ENCODE measurements at regions of chr19 and their contacts with region 1.

Region 1: GRCh38 chr19:43668406-43669158 is 1.4 kb downstream of the PLAUR start:
- DNase-seq: peak; percentile 95 to 99 (median 97)
- H3K4me3 ChIP-seq: peak overlapping the region; percentile 68 to 76
- H3K4me3 Mint-ChIP-seq: peak overlapping the region; percentile 86 to 95 (median 92)
- H3K27ac ChIP-seq: peak overlapping the region; percentile 61
- H3K27ac Mint-ChIP-seq: peak overlapping the region; percentile 84 to 97 (median 95)
- H3K4me1 ChIP-seq: peaks cover 36% of the 10 kb centered on the region
- H3K4me1 Mint-ChIP-seq: peaks cover 32 to 58% (median 42%) of the 10 kb centered on the region in 4 donors
- H3K27me3 ChIP-seq: no peaks in the 10 kb centered on the region
- H3K27me3 Mint-ChIP-seq: no peaks in the 10 kb centered on the region

Region 2: DNA sequence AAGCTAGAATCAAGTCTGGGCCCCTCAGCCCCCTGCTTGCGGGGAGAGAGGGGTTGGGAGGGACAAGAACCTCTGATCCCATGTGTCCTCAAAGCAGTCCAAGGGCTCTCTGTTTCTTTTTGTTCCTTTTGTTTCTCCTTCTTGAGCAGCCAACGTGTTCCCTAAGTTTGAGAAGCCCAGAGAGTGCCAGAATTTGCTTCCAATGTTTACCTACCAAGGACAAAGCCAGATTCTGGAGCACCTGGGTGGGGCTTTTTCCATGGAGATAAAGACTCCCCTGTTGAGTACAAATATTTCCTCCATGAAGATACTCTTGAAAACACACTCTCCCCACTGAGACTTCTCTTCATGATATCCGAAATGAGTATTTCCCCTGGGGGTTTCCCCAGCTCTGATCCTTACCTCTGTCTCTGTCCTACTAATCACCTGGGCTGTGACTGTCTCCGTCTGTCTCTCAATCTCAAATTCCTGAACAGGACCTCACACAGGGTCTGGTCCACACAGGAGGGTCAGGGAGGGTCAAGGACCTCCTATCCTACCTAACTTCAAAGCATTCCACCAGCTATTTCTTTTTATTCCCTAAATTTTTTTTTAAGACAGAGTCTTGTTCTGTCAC is 287.7 kb before region 1 on chr19:
- CTCF ChIA-PET with region 1: no interaction called
- POLR2A ChIA-PET with region 1: no interaction called
- intact Hi-C with region 1: no loop called
- DNase-seq: no peak
- H3K4me3 ChIP-seq: no peak overlapping the region
- H3K4me3 Mint-ChIP-seq: no peak overlapping the region
- H3K27ac ChIP-seq: no peak overlapping the region
- H3K27ac Mint-ChIP-seq: no peak overlapping the region
- H3K4me1 ChIP-seq: no peaks in the 10 kb centered on the region
- H3K4me1 Mint-ChIP-seq: no peaks in the 10 kb centered on the region
- H3K27me3 ChIP-seq: no peaks in the 10 kb centered on the region
- H3K27me3 Mint-ChIP-seq: peaks cover 5 to 9% of the 10 kb centered on the region in 2 donors

Region 3: GRCh38 chr19:43503501-43504425 is 164.8 kb before region 1 on chr19:
- CTCF ChIA-PET with region 1: no interaction called
- POLR2A ChIA-PET with region 1: interaction called, 14 read pairs
- intact Hi-C with region 1: no loop called
- DNase-seq: peak; percentile 96 to 99 (median 97)
- H3K4me3 ChIP-seq: peak overlapping the region; percentile 73 to 74
- H3K4me3 Mint-ChIP-seq: peak overlapping the region; percentile 91 to 98 (median 94)
- H3K27ac ChIP-seq: peak overlapping the region; percentile 89
- H3K27ac Mint-ChIP-seq: peak overlapping the region; percentile 95 to 100 (median 98)
- H3K4me1 ChIP-seq: peaks cover 22% of the 10 kb centered on the region
- H3K4me1 Mint-ChIP-seq: peaks cover 16 to 51% (median 34%) of the 10 kb centered on the region in 4 donors
- H3K27me3 ChIP-seq: no peaks in the 10 kb centered on the region
- H3K27me3 Mint-ChIP-seq: no peaks in the 10 kb centered on the region

Region 4: GRCh38 chr19:43555185-43555770 is 113.3 kb before region 1 on chr19:
- CTCF ChIA-PET with region 1: interaction called, 14 read pairs
- POLR2A ChIA-PET with region 1: interaction called, 5 read pairs
- intact Hi-C with region 1: no loop called
- DNase-seq: peak; percentile 81 to 85 (median 82)
- H3K4me3 ChIP-seq: no peak overlapping the region
- H3K4me3 Mint-ChIP-seq: peak overlapping the region in 2 of 8 donors; percentile 31 to 52
- H3K27ac ChIP-seq: no peak overlapping the region
- H3K27ac Mint-ChIP-seq: peak overlapping the region; percentile 6 to 85 (median 77)
- H3K4me1 ChIP-seq: peaks cover 7% of the 10 kb centered on the region
- H3K4me1 Mint-ChIP-seq: peaks cover 10 to 19% (median 12%) of the 10 kb centered on the region in 4 donors
- H3K27me3 ChIP-seq: no peaks in the 10 kb centered on the region
- H3K27me3 Mint-ChIP-seq: no peaks in the 10 kb centered on the region

Region 5: DNA sequence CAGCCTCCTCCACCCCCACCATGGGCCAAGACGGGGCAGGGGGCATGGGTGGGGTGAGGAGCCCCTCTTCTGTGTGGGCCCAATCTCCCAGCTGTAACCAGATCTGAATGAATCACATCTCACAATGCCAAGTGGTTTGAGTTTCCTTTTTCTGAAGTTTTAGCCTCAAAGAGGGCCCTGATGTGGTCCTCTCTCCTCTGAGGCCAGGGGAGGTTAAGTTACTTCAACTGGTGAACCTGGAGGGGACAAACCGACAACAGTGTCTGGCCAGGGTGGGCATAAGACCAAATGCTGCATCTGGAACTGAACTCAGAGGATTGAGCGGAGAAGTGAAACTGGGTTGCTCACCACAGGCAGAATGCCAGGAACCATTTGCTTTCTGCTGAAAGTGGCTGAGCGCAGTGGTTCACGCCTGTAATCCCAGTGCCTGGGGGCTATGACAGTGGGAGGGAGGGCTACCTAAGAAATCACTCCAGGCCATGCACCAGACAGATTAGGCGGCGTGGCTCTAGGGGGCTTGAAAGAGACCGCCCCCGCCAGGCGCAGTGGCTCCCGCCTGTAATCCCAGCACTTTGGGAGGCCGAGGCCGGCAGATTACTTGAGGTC is 31.9 kb after region 1 on chr19:
- CTCF ChIA-PET with region 1: interaction called, 5 read pairs
- POLR2A ChIA-PET with region 1: interaction called, 6 read pairs
- intact Hi-C with region 1: loop called (anchors 1 kb)
- DNase-seq: peak in 1 of 5 donors; percentile 2
- H3K4me3 ChIP-seq: peak overlapping the region in 1 of 2 donors; percentile 29
- H3K4me3 Mint-ChIP-seq: peak overlapping the region; percentile 79 to 91 (median 86)
- H3K27ac ChIP-seq: peak overlapping the region; percentile 74
- H3K27ac Mint-ChIP-seq: peak overlapping the region; percentile 71 to 99 (median 98)
- H3K4me1 ChIP-seq: peaks cover 14% of the 10 kb centered on the region
- H3K4me1 Mint-ChIP-seq: peaks cover 16 to 32% (median 19%) of the 10 kb centered on the region in 4 donors
- H3K27me3 ChIP-seq: no peaks in the 10 kb centered on the region
- H3K27me3 Mint-ChIP-seq: peaks cover 0 to 4% of the 10 kb centered on the region in 2 donors

Region 6: DNA sequence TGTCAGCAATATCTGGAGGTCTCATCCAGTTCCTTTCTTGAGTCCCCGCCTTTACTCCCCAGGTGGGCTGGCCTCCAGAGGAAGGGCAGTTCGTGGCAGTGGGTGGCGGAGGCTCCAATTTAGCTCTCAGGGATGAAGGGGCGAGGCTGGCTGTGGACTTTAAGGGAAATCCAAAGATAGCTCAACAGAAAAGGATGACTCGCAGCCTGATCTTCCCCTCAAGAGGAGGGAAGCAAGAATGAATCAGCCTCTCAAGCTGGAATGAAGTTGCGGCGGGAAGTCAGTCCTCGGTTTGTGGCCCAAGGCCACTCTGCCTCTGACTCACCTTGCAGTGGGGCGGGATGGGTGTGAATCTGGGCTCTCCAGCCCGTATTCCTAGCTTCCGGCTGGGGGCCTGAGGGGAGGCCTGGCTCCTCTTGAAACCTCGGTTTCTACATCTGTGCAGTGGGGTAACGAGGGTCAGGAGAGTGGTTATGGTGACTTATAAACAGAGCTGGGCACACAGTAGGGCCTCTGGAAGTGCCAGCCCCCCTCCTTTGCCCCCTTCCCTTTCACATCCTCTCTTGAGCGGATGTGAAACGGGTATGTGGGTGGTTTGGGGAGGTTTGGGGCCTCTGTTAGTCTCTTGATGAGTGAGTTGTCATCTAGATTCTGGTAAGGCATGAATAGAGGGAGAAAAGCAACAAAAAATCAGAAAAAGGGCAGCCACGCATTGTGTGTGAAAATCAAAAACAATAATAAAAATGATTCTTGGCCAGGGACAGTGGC is 96.7 kb after region 1 on chr19:
- CTCF ChIA-PET with region 1: interaction called, 11 read pairs
- POLR2A ChIA-PET with region 1: interaction called, 5 read pairs
- intact Hi-C with region 1: no loop called
- DNase-seq: peak; percentile 59 to 91 (median 63)
- H3K4me3 ChIP-seq: peak overlapping the region in 1 of 2 donors; percentile 25
- H3K4me3 Mint-ChIP-seq: peak overlapping the region; percentile 34 to 75 (median 66)
- H3K27ac ChIP-seq: peak overlapping the region; percentile 50
- H3K27ac Mint-ChIP-seq: peak overlapping the region; percentile 83 to 94 (median 90)
- H3K4me1 ChIP-seq: peaks cover 40% of the 10 kb centered on the region
- H3K4me1 Mint-ChIP-seq: peaks cover 26 to 49% (median 39%) of the 10 kb centered on the region in 4 donors
- H3K27me3 ChIP-seq: no peaks in the 10 kb centered on the region
- H3K27me3 Mint-ChIP-seq: no peaks in the 10 kb centered on the region

Region 7: DNA sequence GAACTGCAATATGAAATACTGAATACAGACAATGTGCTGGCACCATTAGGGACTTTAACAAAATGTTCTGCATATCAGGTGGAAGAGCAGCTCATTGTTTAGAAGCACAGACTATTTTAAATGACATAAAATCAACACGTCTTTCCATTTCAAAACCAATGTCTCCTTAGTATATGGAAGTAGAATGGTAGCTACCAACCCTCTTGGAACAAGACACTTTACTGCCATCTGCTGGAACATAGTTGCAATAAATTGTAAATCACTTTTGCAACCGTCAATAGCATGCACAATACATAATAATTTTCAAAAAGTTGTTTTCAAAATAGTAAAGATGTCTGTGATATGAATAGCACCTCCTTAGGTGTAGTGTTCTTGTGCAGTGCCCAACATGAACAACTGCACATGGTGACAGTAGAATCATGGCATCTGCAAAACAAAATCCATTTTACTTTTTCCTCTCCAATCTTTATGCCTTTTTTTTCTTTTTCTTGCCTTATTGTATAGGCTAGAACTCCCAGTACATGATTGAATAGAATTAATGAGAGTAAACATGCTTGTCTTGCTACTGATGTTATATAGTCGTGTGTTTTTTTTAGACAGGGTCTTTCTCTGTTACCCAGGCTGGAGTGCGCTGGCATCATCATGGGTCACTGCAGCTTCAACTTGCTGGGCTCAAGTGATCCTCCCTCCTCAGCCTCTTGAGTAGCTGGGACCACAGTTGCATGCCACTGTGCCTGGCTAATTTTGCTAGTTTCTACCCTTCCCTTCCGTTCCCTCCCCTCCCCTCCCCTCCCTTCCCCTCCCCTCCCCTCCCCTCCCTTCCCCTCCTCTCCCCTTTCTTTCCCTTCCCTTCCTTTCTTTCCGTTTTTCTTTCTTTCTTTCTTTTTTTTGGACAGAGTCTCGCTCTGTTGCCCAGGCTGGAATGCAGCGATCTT is 141.4 kb after region 1 on chr19:
- CTCF ChIA-PET with region 1: interaction called, 10 read pairs
- POLR2A ChIA-PET with region 1: no interaction called
- intact Hi-C with region 1: no loop called
- DNase-seq: peak in 4 of 5 donors; percentile 49 to 58 (median 55)
- H3K4me3 ChIP-seq: no peak overlapping the region
- H3K4me3 Mint-ChIP-seq: no peak overlapping the region
- H3K27ac ChIP-seq: no peak overlapping the region
- H3K27ac Mint-ChIP-seq: no peak overlapping the region
- H3K4me1 ChIP-seq: peaks cover 14% of the 10 kb centered on the region
- H3K4me1 Mint-ChIP-seq: peaks cover 0 to 13% (median 3%) of the 10 kb centered on the region in 4 donors
- H3K27me3 ChIP-seq: no peaks in the 10 kb centered on the region
- H3K27me3 Mint-ChIP-seq: peaks cover 1 to 11% of the 10 kb centered on the region in 2 donors